ENCODE measurements at regions of chr7 and their contacts with region 1.

Region 1: GRCh38 chr7:115707258-115708012 is 323.1 kb downstream of the TFEC start:
- DNase-seq: peak; percentile 72
- H3K4me3 Mint-ChIP-seq: no peak overlapping the region
- H3K27ac Mint-ChIP-seq: peak overlapping the region; percentile 96
- H3K4me1 Mint-ChIP-seq: peaks cover 21% of the 10 kb centered on the region
- H3K27me3 Mint-ChIP-seq: no peaks in the 10 kb centered on the region
- CTCF ChIP-seq: peak; percentile 66

Region 2: GRCh38 chr7:114865564-114865963 is 841.9 kb before region 1 on chr7:
- CTCF ChIA-PET with region 1: interaction called, 10 read pairs
- intact Hi-C with region 1: loop called (anchors 10 kb)
- DNase-seq: peak; percentile 63
- H3K4me3 Mint-ChIP-seq: no peak overlapping the region
- H3K27ac Mint-ChIP-seq: no peak overlapping the region
- H3K4me1 Mint-ChIP-seq: peaks cover 9% of the 10 kb centered on the region
- H3K27me3 Mint-ChIP-seq: no peaks in the 10 kb centered on the region
- CTCF ChIP-seq: peak; percentile 47

Region 3: DNA sequence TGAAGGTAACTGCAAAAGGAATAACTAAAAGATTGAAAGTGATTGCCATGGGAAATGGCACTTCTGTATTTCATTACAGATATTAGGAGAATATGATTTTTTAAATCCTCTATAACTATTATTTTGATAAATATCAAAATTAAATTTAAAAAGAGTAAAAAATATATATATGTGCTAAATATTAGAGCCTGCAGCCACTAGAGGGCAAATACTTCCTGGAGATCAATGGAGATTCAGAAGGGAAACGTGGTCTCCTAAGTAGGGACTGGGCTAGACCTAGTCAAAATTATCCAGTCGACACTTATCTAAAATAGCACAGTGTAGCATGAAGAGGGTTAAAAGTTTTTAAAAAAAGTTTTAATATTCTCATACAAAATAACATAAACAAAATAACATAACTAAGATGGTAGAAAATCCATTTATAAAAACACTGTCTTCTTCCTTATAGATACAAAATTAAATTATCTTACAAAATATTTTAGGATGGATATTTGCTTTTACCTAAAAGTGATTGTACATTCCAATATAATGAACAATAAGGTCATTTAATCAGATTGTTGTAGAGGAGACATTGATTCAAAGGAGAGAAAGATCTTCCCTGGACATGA is 351.2 kb before region 1 on chr7:
- CTCF ChIA-PET with region 1: no interaction called
- intact Hi-C with region 1: loop called (anchors 1 kb)
- DNase-seq: peak; percentile 14
- H3K4me3 Mint-ChIP-seq: no peak overlapping the region
- H3K27ac Mint-ChIP-seq: no peak overlapping the region
- H3K4me1 Mint-ChIP-seq: peaks cover 9% of the 10 kb centered on the region
- H3K27me3 Mint-ChIP-seq: no peaks in the 10 kb centered on the region
- CTCF ChIP-seq: peak; percentile 40

Region 4: GRCh38 chr7:115511330-115511729 is 196.1 kb before region 1 on chr7:
- CTCF ChIA-PET with region 1: no interaction called
- intact Hi-C with region 1: loop called (anchors 5 kb)
- DNase-seq: peak; percentile 8
- H3K4me3 Mint-ChIP-seq: no peak overlapping the region
- H3K27ac Mint-ChIP-seq: no peak overlapping the region
- H3K4me1 Mint-ChIP-seq: no peaks in the 10 kb centered on the region
- H3K27me3 Mint-ChIP-seq: no peaks in the 10 kb centered on the region
- CTCF ChIP-seq: no peak

Region 5: GRCh38 chr7:115618676-115619075 is 88.8 kb before region 1 on chr7:
- CTCF ChIA-PET with region 1: no interaction called
- intact Hi-C with region 1: no loop called
- DNase-seq: no peak
- H3K4me3 Mint-ChIP-seq: no peak overlapping the region
- H3K27ac Mint-ChIP-seq: no peak overlapping the region
- H3K4me1 Mint-ChIP-seq: no peaks in the 10 kb centered on the region
- H3K27me3 Mint-ChIP-seq: no peaks in the 10 kb centered on the region
- CTCF ChIP-seq: no peak